ENCODE measurements at regions of chr1 and their contacts with region 1.

Region 1: DNA sequence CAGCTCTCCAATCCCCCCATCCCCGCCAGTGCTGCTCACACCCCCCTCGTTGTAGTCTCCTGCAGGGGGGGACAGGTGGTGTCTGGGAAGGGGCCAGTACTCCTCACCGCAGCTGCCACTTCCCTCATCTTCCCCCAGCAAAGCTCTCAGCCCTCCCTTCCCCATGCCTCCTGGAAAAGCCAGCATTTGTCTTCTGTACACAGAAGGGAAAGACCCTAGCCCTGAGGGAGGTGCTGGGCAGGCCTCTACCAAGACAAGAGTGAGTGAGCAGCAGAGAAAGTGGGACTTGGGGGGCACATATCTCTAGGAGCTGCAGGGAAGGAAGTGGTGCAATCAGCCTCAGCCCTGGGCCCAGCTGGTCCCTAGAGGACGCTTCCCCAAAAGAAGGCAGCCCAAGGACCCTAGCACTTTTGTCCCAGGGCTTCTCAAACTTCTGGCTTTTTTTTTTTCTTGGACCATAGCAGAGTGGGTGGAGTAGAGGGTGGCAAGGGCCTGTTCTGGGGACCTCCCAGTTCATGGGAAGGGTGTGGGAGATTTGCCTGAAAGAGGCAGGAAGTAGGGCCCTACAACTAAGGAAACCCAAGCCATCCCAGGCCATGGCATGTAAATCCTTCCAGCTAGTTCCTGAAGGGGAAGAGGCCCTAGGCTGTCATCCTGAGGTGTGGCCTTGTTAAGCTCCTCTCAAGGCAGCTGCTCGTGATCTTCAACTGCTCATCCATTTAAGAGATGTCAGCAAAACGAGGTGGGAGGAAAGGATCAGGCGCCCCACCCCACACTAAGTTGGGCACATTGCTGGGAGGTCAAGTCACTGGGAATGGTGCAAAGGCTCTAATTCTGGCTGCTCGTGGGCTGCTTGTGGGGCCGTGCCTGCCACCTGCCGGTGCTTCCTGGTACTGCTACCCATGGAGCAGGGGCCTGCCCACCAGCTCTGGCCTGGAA is 12.6 kb downstream of the ZC3H12A start:
- DNase-seq: peak; percentile 85 to 95 (median 93)
- ATAC-seq: peak; percentile 63 to 85
- H3K4me3 ChIP-seq: no peak overlapping the region
- H3K27ac ChIP-seq: peak overlapping the region; percentile 73
- H3K4me1 ChIP-seq: peaks cover 10% of the 10 kb centered on the region
- H3K27me3 ChIP-seq: no peaks in the 10 kb centered on the region

Region 2: GRCh38 chr1:37123266-37124115 is 363.5 kb before region 1 on chr1:
- intact Hi-C with region 1: no loop called
- DNase-seq: no peak
- ATAC-seq: no peak
- H3K4me3 ChIP-seq: no peak overlapping the region
- H3K27ac ChIP-seq: no peak overlapping the region
- H3K4me1 ChIP-seq: peaks cover 5% of the 10 kb centered on the region
- H3K27me3 ChIP-seq: no peaks in the 10 kb centered on the region

Region 3: GRCh38 chr1:37449936-37450335 is 37.0 kb before region 1 on chr1:
- intact Hi-C with region 1: loop called (anchors 1 to 5 kb)
- DNase-seq: no peak
- ATAC-seq: no peak
- H3K4me3 ChIP-seq: no peak overlapping the region
- H3K27ac ChIP-seq: no peak overlapping the region
- H3K4me1 ChIP-seq: no peaks in the 10 kb centered on the region
- H3K27me3 ChIP-seq: no peaks in the 10 kb centered on the region

Region 4: DNA sequence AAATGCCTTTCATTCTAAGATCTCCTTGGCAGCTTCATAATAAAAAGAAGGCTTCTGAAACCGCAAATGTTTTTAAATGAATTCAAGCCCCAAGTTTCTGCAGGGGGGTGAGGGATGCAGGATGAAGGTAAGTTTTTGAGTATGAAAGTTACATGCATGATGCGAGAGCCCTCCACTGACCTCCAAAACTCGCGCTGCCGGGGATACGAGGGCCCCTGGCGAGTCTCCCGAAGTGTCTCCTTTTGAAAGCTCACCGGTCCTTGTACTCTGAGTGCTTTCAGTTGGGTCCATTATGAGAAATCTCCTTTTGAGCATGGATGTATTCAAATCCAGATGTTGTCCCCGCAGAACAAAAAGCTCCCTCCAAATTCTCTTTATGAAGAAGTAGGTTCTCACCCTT is 31.4 kb before region 1 on chr1:
- intact Hi-C with region 1: loop called (anchors 1 to 5 kb)
- DNase-seq: no peak
- ATAC-seq: no peak
- H3K4me3 ChIP-seq: no peak overlapping the region
- H3K27ac ChIP-seq: peak overlapping the region; percentile 60
- H3K4me1 ChIP-seq: no peaks in the 10 kb centered on the region
- H3K27me3 ChIP-seq: no peaks in the 10 kb centered on the region